Endothelial cell of umbilical vein (primary cell): ENCODE measurements at regions of chr5 and their contacts with region 1.

Region 1: GRCh38 chr5:56190497-56190896 is 42.6 kb downstream of the ANKRD55 start:
- DNase-seq: peak; percentile 96
- H3K4me3 ChIP-seq: no peak overlapping the region
- H3K27ac ChIP-seq: peak overlapping the region; percentile 77
- H3K4me1 ChIP-seq: peaks cover 33% of the 10 kb centered on the region
- H3K27me3 ChIP-seq: no peaks in the 10 kb centered on the region
- CTCF ChIP-seq: no peak
- POLR2A ChIP-seq: no peak

Region 2: GRCh38 chr5:56085193-56085592 is 105.3 kb before region 1 on chr5:
- CTCF ChIA-PET with region 1: no interaction called
- POLR2A ChIA-PET with region 1: no interaction called
- dilution Hi-C with region 1: no loop called
- intact Hi-C with region 1: loop called (anchors 1 kb)
- DNase-seq: peak; percentile 88
- H3K4me3 ChIP-seq: no peak overlapping the region
- H3K27ac ChIP-seq: peak overlapping the region; percentile 53
- H3K4me1 ChIP-seq: peaks cover 15% of the 10 kb centered on the region
- H3K27me3 ChIP-seq: no peaks in the 10 kb centered on the region
- CTCF ChIP-seq: no peak
- POLR2A ChIP-seq: peak; percentile 17

Region 3: GRCh38 chr5:56169281-56169680 is 21.2 kb before region 1 on chr5:
- CTCF ChIA-PET with region 1: no interaction called
- POLR2A ChIA-PET with region 1: no interaction called
- dilution Hi-C with region 1: no loop called
- intact Hi-C with region 1: loop called (anchors 1 kb)
- DNase-seq: peak; percentile 95
- H3K4me3 ChIP-seq: no peak overlapping the region
- H3K27ac ChIP-seq: peak overlapping the region; percentile 96
- H3K4me1 ChIP-seq: peaks cover 48% of the 10 kb centered on the region
- H3K27me3 ChIP-seq: no peaks in the 10 kb centered on the region
- CTCF ChIP-seq: no peak
- POLR2A ChIP-seq: no peak

Region 4: GRCh38 chr5:56175488-56175887 is 15.0 kb before region 1 on chr5:
- CTCF ChIA-PET with region 1: no interaction called
- POLR2A ChIA-PET with region 1: no interaction called
- dilution Hi-C with region 1: no loop called
- intact Hi-C with region 1: loop called (anchors 1 kb)
- DNase-seq: peak; percentile 81
- H3K4me3 ChIP-seq: no peak overlapping the region
- H3K27ac ChIP-seq: peak overlapping the region; percentile 47
- H3K4me1 ChIP-seq: peaks cover 35% of the 10 kb centered on the region
- H3K27me3 ChIP-seq: no peaks in the 10 kb centered on the region
- CTCF ChIP-seq: no peak
- POLR2A ChIP-seq: no peak